Activated B cell treated with CpG ODN at 0.5 μM for 24 hours (primary cell): ENCODE measurements at regions of chr10 and their contacts with region 1.

Region 1: GRCh38 chr10:13959443-13960359 is 371.0 kb downstream of the FRMD4A start:
- DNase-seq: no peak
- ATAC-seq: no peak
- H3K4me3 Mint-ChIP-seq: no peak overlapping the region
- H3K27ac Mint-ChIP-seq: no peak overlapping the region
- H3K4me1 Mint-ChIP-seq: no peaks in the 10 kb centered on the region
- H3K27me3 Mint-ChIP-seq: peaks cover 15% of the 10 kb centered on the region
- CTCF ChIP-seq: no peak

Region 2: DNA sequence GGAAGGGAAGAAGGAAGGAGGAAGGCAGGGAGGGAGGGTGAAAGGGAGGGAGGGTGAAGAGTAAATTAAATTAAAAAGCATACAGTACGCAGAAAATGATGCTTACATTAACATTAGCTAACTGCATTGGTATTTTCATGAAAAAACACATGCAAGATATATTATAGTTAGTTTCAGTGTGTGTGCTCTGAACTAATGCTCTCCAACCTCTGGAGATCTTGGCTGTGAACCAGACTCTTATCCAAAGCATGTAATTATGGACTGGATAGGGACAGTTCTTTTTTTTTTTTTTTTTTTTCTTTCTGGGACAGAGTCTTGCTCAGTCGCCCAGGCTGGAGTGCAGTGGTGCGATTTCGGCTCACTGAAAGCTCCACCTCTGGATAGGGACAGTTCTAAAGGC is 14.0 kb after region 1 on chr10:
- CTCF ChIA-PET with region 1: no interaction called
- POLR2A ChIA-PET with region 1: interaction called, 11 read pairs
- intact Hi-C with region 1: no loop called
- DNase-seq: no peak
- ATAC-seq: no peak
- H3K4me3 Mint-ChIP-seq: no peak overlapping the region
- H3K27ac Mint-ChIP-seq: no peak overlapping the region
- H3K4me1 Mint-ChIP-seq: no peaks in the 10 kb centered on the region
- H3K27me3 Mint-ChIP-seq: peaks cover 15% of the 10 kb centered on the region
- CTCF ChIP-seq: no peak